CD8-positive, alpha-beta T cell (primary cell): ENCODE measurements at regions of chr1 and their contacts with region 1.

Region 1: GRCh38 chr1:80624682-80625081 is 1176.1 kb upstream of the ADGRL2 start:
- DNase-seq: no peak
- ATAC-seq: no peak
- H3K4me3 ChIP-seq: no peak overlapping the region
- H3K4me3 Mint-ChIP-seq: no peak overlapping the region
- H3K27ac ChIP-seq: no peak overlapping the region
- H3K27ac Mint-ChIP-seq: no peak overlapping the region
- H3K4me1 ChIP-seq: no peaks in the 10 kb centered on the region
- H3K4me1 Mint-ChIP-seq: no peaks in the 10 kb centered on the region
- H3K27me3 ChIP-seq: no peaks in the 10 kb centered on the region
- H3K27me3 Mint-ChIP-seq: no peaks in the 10 kb centered on the region
- CTCF ChIP-seq: no peak

Region 2: GRCh38 chr1:80008934-80009333 is 615.7 kb before region 1 on chr1:
- CTCF ChIA-PET with region 1: no interaction called
- POLR2A ChIA-PET with region 1: no interaction called
- intact Hi-C with region 1: no loop called
- DNase-seq: no peak
- ATAC-seq: no peak
- H3K4me3 ChIP-seq: no peak overlapping the region
- H3K4me3 Mint-ChIP-seq: no peak overlapping the region
- H3K27ac ChIP-seq: no peak overlapping the region
- H3K27ac Mint-ChIP-seq: no peak overlapping the region
- H3K4me1 ChIP-seq: no peaks in the 10 kb centered on the region
- H3K4me1 Mint-ChIP-seq: no peaks in the 10 kb centered on the region
- H3K27me3 ChIP-seq: no peaks in the 10 kb centered on the region
- H3K27me3 Mint-ChIP-seq: no peaks in the 10 kb centered on the region
- CTCF ChIP-seq: no peak

Region 3: GRCh38 chr1:80666073-80666472 is 41.4 kb after region 1 on chr1:
- CTCF ChIA-PET with region 1: no interaction called
- POLR2A ChIA-PET with region 1: no interaction called
- intact Hi-C with region 1: loop called in 1 of 2 experiments (anchors 5 kb)
- DNase-seq: no peak
- ATAC-seq: no peak
- H3K4me3 ChIP-seq: no peak overlapping the region
- H3K4me3 Mint-ChIP-seq: no peak overlapping the region
- H3K27ac ChIP-seq: no peak overlapping the region
- H3K27ac Mint-ChIP-seq: no peak overlapping the region
- H3K4me1 ChIP-seq: no peaks in the 10 kb centered on the region
- H3K4me1 Mint-ChIP-seq: no peaks in the 10 kb centered on the region
- H3K27me3 ChIP-seq: no peaks in the 10 kb centered on the region
- H3K27me3 Mint-ChIP-seq: no peaks in the 10 kb centered on the region
- CTCF ChIP-seq: no peak